Activated CD8-positive, alpha-beta T cell treated with anti-CD3 and anti-CD28 coated beads for 36 hours (primary cell): ENCODE measurements at regions of chr6 and their contacts with region 1.

Region 1: DNA sequence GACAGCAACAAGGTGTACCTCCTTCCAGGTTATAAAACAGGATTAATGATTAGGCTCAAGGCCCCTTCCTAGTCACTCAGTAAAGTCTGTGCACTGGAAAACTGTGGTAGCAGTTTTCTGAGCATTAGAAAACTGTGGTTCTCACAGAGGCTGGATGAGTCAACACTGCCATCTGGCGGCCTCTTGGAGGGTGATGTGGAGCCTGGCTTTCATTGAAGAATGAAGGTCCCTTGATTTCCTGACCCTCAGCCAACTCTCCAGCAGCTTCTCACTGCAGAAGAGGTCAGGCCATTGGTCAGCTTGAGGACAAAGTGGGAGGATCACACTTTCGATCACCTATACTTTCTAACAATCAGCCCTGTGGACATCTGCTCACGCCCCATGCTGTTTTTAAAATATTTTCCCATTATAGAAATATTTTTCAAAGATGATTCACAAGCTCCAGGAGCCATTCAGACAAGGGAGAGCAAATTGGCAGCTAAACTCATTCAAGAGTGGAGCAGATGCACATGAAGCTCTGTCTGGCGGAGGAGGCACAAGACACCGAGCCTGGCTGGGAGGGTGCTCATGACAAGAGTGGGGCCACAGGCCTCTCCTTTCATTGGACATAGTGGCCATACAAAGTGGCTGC is 23.2 kb downstream of the PSMB1 start:
- DNase-seq: peak; percentile 83
- ATAC-seq: peak; percentile 77
- H3K4me3 Mint-ChIP-seq: no peak overlapping the region
- H3K27ac Mint-ChIP-seq: no peak overlapping the region
- H3K4me1 Mint-ChIP-seq: peaks cover 7% of the 10 kb centered on the region
- H3K27me3 Mint-ChIP-seq: no peaks in the 10 kb centered on the region
- CTCF ChIP-seq: peak; percentile 83

Region 2: GRCh38 chr6:168895102-168895812 is 1634.7 kb before region 1 on chr6:
- CTCF ChIA-PET with region 1: interaction called, 3 read pairs
- POLR2A ChIA-PET with region 1: no interaction called
- intact Hi-C with region 1: loop called (anchors 10 kb)
- DNase-seq: peak; percentile 88
- ATAC-seq: peak; percentile 97
- H3K4me3 Mint-ChIP-seq: peak overlapping the region; percentile 11
- H3K27ac Mint-ChIP-seq: peak overlapping the region; percentile 49
- H3K4me1 Mint-ChIP-seq: peaks cover 10% of the 10 kb centered on the region
- H3K27me3 Mint-ChIP-seq: peaks cover 2% of the 10 kb centered on the region
- CTCF ChIP-seq: peak; percentile 65

Region 3: GRCh38 chr6:169950558-169950957 is 579.4 kb before region 1 on chr6:
- CTCF ChIA-PET with region 1: interaction called, 21 read pairs
- POLR2A ChIA-PET with region 1: no interaction called
- intact Hi-C with region 1: no loop called
- DNase-seq: peak; percentile 58
- ATAC-seq: peak; percentile 58
- H3K4me3 Mint-ChIP-seq: no peak overlapping the region
- H3K27ac Mint-ChIP-seq: no peak overlapping the region
- H3K4me1 Mint-ChIP-seq: peaks cover 9% of the 10 kb centered on the region
- H3K27me3 Mint-ChIP-seq: no peaks in the 10 kb centered on the region
- CTCF ChIP-seq: peak; percentile 44

Region 4: DNA sequence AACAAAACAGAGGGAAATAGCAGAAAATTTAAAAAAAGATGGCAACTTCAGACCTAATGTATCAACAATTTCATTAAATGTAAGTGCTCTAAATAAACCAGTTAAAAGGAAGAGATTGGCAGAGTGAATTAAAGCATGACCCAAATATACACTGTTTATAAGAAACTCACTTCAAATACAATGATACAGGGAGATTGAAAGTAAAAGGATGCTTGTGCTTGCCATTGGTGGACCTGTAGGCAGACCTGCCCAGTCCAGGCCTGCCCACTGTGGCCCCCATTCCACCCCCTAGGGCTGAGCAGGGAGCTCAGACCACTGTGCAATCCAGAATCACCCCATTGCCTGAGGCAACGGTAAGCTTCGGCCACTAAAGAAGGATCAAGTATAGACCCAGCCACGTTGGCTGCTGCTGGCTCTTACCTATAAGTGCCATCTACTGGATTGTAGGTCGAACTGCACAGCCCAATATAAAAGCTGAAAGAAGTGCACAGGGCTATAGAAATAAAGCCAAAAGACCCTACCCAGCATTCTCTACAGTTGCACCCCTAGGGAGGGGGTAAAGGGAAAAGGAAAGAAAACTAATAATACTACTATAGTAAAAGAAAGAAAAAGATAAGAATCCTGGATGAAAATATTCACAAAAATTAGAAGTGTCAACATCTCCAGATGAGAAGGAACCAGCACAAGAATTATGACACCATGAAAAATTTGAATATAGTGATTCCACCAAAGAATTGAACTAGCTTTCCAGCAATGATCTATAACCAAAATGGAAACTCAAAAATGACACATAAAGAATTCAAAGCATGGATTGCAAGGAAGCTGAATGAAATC is 13.0 kb before region 1 on chr6:
- CTCF ChIA-PET with region 1: interaction called, 43 read pairs
- POLR2A ChIA-PET with region 1: no interaction called
- intact Hi-C with region 1: no loop called
- DNase-seq: peak; percentile 62
- ATAC-seq: peak; percentile 99
- H3K4me3 Mint-ChIP-seq: no peak overlapping the region
- H3K27ac Mint-ChIP-seq: no peak overlapping the region
- H3K4me1 Mint-ChIP-seq: no peaks in the 10 kb centered on the region
- H3K27me3 Mint-ChIP-seq: peaks cover 10% of the 10 kb centered on the region
- CTCF ChIP-seq: peak; percentile 84

Region 5: GRCh38 chr6:170542031-170542719 is 12.2 kb after region 1 on chr6:
- CTCF ChIA-PET with region 1: interaction called, 47 read pairs
- POLR2A ChIA-PET with region 1: no interaction called
- intact Hi-C with region 1: no loop called
- DNase-seq: no peak
- ATAC-seq: no peak
- H3K4me3 Mint-ChIP-seq: no peak overlapping the region
- H3K27ac Mint-ChIP-seq: peak overlapping the region; percentile 20
- H3K4me1 Mint-ChIP-seq: peaks cover 25% of the 10 kb centered on the region
- H3K27me3 Mint-ChIP-seq: no peaks in the 10 kb centered on the region
- CTCF ChIP-seq: no peak

Region 6: GRCh38 chr6:170554013-170554795 is 24.2 kb after region 1 on chr6 and contains the start of gene TBP:
- CTCF ChIA-PET with region 1: interaction called, 17 read pairs
- POLR2A ChIA-PET with region 1: interaction called, 3 read pairs
- intact Hi-C with region 1: no loop called
- DNase-seq: peak; percentile 99
- ATAC-seq: peak; percentile 96
- H3K4me3 Mint-ChIP-seq: no peak within 1 kb of the TSS
- H3K27ac Mint-ChIP-seq: no peak within 1 kb of the TSS
- H3K4me1 Mint-ChIP-seq: peaks cover 46% of the 10 kb centered on the region
- H3K27me3 Mint-ChIP-seq: no peaks in the 10 kb centered on the region
- CTCF ChIP-seq: no peak
- total RNA-seq, gene TBP: 21.0 to 22.1 TPM